ENCODE measurements at regions of chrX and their contacts with region 1.

Region 1: DNA sequence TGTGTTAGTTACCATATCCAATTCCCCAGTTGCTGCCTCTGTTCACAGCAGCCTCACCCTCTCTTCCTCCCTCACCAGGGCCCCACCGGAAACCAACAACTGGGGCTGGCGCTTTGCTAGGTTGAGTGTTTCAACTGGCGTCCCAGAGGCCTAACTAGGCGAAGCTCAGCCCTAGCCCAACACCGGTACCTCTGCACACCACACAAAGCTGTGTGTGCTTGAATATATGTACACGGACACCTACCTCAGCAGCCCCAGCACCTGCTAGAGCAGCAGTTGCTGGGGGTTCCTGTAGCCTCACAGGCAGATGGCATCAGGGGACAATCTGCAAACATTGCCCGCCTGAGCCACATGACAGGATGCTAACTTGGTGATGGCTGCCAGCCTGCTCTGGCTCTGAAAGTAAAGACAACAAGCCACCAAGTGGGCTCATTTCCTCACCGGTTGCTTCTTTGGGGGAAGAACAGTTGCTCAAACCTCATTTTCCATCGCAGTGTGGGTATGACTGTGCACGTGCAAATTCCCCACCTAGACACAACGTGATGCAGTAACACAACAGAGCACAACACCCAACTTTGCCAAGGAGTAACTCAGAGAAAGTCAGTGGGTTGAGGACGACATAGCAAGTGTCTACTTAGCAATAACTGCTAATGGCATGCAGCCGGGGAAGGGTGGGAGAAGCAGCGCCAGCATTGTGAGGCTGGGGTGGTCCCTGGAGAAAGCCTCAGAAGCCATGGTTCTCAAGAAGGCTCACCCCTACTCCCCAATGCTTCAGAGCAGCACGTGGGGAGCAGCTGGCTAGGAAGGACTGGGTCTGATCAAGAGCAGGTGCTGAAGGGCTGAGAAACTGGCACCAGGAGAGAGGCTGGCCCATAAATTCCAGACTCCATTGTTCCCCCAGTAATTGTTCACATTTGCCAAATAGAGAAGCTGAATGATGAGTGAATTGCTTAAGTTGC is 139.5 kb downstream of the SH3KBP1 start:
- DNase-seq: peak; percentile 87
- H3K4me3 Mint-ChIP-seq: peak overlapping the region; percentile 65
- H3K27ac Mint-ChIP-seq: peak overlapping the region; percentile 94
- H3K4me1 Mint-ChIP-seq: peaks cover 92% of the 10 kb centered on the region
- H3K27me3 Mint-ChIP-seq: no peaks in the 10 kb centered on the region

Region 2: DNA sequence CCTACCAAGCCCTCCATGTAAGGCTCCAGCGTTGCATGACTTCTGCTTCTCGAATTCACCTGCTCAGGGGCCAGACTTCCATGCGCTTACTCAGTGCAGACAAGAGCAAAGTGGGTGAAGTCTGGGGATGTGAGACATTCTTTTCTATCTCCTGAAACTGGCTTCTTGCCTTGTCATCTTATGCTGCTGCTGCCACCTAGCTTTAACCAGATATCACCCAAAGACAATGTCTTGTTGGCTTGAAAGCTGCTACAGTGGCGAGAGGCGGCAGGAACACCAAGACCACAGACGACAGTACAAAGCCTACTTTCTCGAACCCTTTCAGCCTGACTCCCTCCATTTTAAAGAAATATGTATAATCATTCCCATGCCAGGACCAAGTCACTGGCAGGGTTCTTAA is 522.0 kb before region 1 on chrX:
- CTCF ChIA-PET with region 1: no interaction called
- intact Hi-C with region 1: no loop called
- DNase-seq: no peak
- H3K4me3 Mint-ChIP-seq: no peak overlapping the region
- H3K27ac Mint-ChIP-seq: no peak overlapping the region
- H3K4me1 Mint-ChIP-seq: no peaks in the 10 kb centered on the region
- H3K27me3 Mint-ChIP-seq: peaks cover 13% of the 10 kb centered on the region

Region 3: DNA sequence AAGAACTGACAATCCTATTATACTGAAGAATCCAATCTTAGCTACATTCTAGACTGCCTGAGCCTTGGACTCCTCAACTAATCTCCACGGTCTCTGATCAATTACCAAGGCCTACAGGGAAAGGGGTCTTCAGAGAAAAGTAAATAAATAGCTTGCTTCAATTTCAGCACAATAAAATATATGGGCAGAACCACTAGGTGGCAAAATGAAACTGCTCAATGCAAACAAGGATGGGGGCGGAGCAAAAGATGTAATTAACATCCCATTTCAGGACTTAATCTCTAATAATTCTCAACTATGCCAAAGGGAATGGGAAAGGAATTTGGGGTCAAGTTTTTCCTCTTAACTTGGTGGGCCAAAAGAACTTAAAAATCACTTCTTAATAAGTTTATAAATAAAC is 154.2 kb before region 1 on chrX:
- CTCF ChIA-PET with region 1: no interaction called
- intact Hi-C with region 1: loop called (anchors 5 kb)
- DNase-seq: peak; percentile 25
- H3K4me3 Mint-ChIP-seq: no peak overlapping the region
- H3K27ac Mint-ChIP-seq: peak overlapping the region; percentile 21
- H3K4me1 Mint-ChIP-seq: peaks cover 6% of the 10 kb centered on the region
- H3K27me3 Mint-ChIP-seq: no peaks in the 10 kb centered on the region

Region 4: GRCh38 chrX:19772826-19773628 is 25.1 kb after region 1 on chrX:
- CTCF ChIA-PET with region 1: interaction called, 7 read pairs
- intact Hi-C with region 1: loop called (anchors 1 kb)
- DNase-seq: no peak
- H3K4me3 Mint-ChIP-seq: peak overlapping the region; percentile 56
- H3K27ac Mint-ChIP-seq: peak overlapping the region; percentile 92
- H3K4me1 Mint-ChIP-seq: peaks cover 77% of the 10 kb centered on the region
- H3K27me3 Mint-ChIP-seq: no peaks in the 10 kb centered on the region

Region 5: DNA sequence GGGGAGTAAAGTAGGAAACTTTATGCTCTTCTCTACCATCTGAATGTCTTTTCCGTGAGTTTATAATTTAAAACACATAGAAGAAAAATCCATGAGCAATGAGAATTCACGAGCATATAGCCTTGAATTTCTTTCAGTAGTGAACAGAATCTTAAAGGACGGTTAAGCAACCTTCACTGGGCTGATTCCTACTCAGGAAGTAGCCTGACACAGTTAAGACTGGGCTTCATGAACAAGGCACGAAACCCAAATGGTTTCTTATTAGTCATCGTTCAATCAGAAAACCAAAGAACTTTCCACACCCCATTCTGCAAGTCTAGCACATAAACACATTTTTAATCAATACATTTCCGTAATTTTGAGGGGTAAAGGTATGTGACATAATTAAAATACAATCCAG is 43.6 kb after region 1 on chrX:
- CTCF ChIA-PET with region 1: interaction called, 5 read pairs
- intact Hi-C with region 1: loop called (anchors 2 kb)
- DNase-seq: no peak
- H3K4me3 Mint-ChIP-seq: peak overlapping the region; percentile 18
- H3K27ac Mint-ChIP-seq: peak overlapping the region; percentile 69
- H3K4me1 Mint-ChIP-seq: peaks cover 74% of the 10 kb centered on the region
- H3K27me3 Mint-ChIP-seq: no peaks in the 10 kb centered on the region

Region 6: GRCh38 chrX:19799319-19800182 is 51.6 kb after region 1 on chrX:
- CTCF ChIA-PET with region 1: interaction called, 5 read pairs
- intact Hi-C with region 1: loop called (anchors 1 kb)
- DNase-seq: peak; percentile 68
- H3K4me3 Mint-ChIP-seq: peak overlapping the region; percentile 88
- H3K27ac Mint-ChIP-seq: peak overlapping the region; percentile 99
- H3K4me1 Mint-ChIP-seq: peaks cover 65% of the 10 kb centered on the region
- H3K27me3 Mint-ChIP-seq: no peaks in the 10 kb centered on the region

Region 7: DNA sequence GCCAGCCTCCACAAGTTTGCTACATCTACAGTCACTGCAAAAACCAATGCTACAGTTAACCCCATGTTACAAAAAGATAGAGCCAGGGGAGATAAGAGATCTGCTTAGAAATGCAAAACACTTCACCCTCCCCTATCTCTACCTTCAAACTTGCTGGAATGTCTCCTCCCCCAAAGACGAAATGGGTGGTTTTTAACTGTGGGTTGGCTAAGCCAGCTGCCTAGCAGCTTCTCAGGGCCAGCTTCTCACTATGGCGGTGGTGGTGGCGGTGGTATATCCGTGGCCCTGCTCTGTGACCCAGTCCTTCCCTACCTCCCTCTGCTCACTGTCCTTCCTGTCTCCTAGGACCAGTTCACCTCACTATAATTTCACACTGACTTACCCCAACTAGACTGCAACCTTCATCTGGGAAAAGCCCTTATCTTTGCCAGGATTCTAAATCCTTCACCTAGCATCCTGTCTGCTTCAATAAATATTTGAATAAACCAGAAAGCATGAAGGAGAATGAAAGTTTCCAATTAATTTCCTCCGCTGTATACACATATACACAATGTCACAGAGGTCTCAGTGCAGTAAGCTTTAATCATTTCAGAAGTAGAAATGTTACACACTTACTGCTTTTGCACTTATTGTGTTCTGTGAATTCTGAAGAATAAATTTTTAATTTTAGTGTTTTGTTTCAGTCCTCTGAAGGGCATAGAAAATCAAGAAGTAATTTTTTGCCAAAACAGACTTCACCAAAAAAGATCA is 93.1 kb after region 1 on chrX:
- CTCF ChIA-PET with region 1: interaction called, 3 read pairs
- intact Hi-C with region 1: loop called (anchors 2 kb)
- DNase-seq: peak; percentile 50
- H3K4me3 Mint-ChIP-seq: peak overlapping the region; percentile 66
- H3K27ac Mint-ChIP-seq: peak overlapping the region; percentile 92
- H3K4me1 Mint-ChIP-seq: peaks cover 72% of the 10 kb centered on the region
- H3K27me3 Mint-ChIP-seq: no peaks in the 10 kb centered on the region

Region 8: DNA sequence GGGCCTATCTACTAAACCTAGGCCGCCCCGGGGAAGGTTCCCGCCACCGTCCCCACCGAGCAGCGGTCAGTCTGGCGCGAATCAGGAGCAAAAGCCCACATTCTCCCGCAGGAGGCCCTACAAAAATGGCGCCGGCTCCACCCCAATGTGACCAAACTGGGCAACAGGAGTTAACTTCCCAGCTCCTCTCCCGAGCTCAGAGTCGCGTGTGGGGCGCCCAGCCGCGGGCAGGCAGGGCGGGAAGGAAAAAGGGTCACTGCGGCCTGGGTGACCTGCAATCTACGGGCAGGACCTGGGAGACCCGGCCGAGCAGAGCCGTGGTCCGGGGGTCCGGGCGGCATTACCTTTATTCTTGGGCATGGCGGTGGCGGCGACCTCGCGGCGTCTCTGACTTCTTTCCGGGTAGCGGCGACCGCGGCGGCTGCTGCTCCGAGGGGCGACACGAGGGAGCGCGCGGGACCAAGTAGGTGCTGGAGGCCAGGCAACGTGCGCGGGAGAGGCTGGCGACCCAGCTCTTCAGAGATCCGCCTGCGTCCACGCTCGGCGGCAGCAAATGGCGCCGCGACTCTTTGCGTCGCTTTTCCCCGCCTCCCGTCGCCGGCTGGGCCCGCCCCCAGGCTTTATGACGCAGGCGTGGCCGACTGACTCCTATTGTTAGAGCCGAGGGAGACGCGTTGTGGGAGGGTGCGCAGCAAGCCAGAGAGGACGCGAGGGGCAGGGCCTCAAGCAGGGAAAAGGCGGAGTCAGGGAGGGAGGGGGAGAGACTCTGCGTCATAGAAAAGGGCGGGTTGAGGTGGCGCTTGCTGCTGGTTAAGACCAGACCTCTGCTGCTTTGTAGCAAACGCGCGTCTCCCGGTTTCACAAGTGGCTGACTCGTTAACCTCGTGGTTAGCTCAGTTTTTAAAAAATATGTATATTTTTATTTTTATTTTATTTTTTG is 393.6 kb after region 1 on chrX and contains the start of gene EIF1AX:
- CTCF ChIA-PET with region 1: no interaction called
- intact Hi-C with region 1: loop called (anchors 5 kb)
- DNase-seq: peak; percentile 97
- H3K4me3 Mint-ChIP-seq: peak within 1 kb of the TSS; percentile 81
- H3K27ac Mint-ChIP-seq: peak within 1 kb of the TSS; percentile 80
- H3K4me1 Mint-ChIP-seq: peaks cover 38% of the 10 kb centered on the region
- H3K27me3 Mint-ChIP-seq: no peaks in the 10 kb centered on the region
- total RNA-seq, gene EIF1AX: 106 to 109 TPM

Region 9: GRCh38 chrX:20197641-20198210 is 449.8 kb after region 1 on chrX:
- CTCF ChIA-PET with region 1: no interaction called
- intact Hi-C with region 1: no loop called
- DNase-seq: no peak
- H3K4me3 Mint-ChIP-seq: no peak overlapping the region
- H3K27ac Mint-ChIP-seq: no peak overlapping the region
- H3K4me1 Mint-ChIP-seq: peaks cover 17% of the 10 kb centered on the region
- H3K27me3 Mint-ChIP-seq: no peaks in the 10 kb centered on the region